Esophagus muscularis mucosa (tissue), 4 donors: ENCODE measurements at regions of chr12 and their contacts with region 1.

Region 1: GRCh38 chr12:108850854-108851573 is 6.4 kb downstream of the SSH1 start:
- DNase-seq: no peak
- H3K4me3 ChIP-seq: no peak overlapping the region
- H3K27ac ChIP-seq: peak overlapping the region; percentile 5 to 96 (median 91)
- H3K4me1 ChIP-seq: peaks cover 88 to 93% (median 90%) of the 10 kb centered on the region in 4 donors
- H3K27me3 ChIP-seq: no peaks in the 10 kb centered on the region
- CTCF ChIP-seq: no peak
- EP300 ChIP-seq: no peak
- POLR2A ChIP-seq: no peak

Region 2: GRCh38 chr12:108803428-108804105 is 47.4 kb before region 1 on chr12:
- intact Hi-C with region 1: loop called (anchors 5 kb)
- DNase-seq: peak; percentile 96
- H3K4me3 ChIP-seq: peak overlapping the region in 1 of 4 donors; percentile 39
- H3K27ac ChIP-seq: peak overlapping the region; percentile 90 to 95 (median 94)
- H3K4me1 ChIP-seq: peaks cover 69 to 87% (median 83%) of the 10 kb centered on the region in 4 donors
- H3K27me3 ChIP-seq: no peaks in the 10 kb centered on the region
- CTCF ChIP-seq: peak; percentile 96 to 99 (median 98)
- EP300 ChIP-seq: no peak
- POLR2A ChIP-seq: no peak

Region 3: GRCh38 chr12:109018296-109018695 is 167.3 kb after region 1 on chr12:
- intact Hi-C with region 1: no loop called
- DNase-seq: no peak
- H3K4me3 ChIP-seq: no peak overlapping the region
- H3K27ac ChIP-seq: no peak overlapping the region
- H3K4me1 ChIP-seq: peaks cover 0 to 8% (median 6%) of the 10 kb centered on the region in 4 donors
- H3K27me3 ChIP-seq: peaks cover 0 to 12% (median 0%) of the 10 kb centered on the region in 4 donors
- CTCF ChIP-seq: no peak
- EP300 ChIP-seq: no peak
- POLR2A ChIP-seq: no peak